Heart left ventricle (tissue), 16 donors: ENCODE measurements at regions of chr6 and their contacts with region 1.

Region 1: DNA sequence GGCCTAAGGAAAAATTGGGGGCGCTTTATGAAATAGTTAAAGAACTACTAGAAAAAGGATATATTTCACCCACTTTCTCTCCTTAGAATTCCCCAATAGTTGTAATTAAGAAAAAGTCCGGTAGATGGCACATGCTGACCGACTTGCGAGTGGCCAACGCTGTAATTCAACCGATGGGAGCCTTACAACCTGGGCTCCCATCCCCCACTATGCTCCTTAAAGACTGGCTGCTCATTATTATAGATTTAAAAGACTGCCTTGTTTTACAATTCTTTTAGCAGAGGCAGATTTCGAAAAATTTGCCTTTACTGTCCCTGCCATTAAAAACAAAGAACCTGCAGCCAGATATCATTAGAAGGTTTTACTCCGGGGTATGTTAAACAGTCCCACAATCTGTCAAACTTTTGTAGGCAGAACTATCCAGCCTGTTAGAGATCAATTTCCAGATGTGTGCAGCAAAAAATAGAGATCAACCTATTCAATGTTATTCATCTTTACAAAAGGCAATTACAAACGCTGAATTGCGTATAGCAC is 58.5 kb upstream of the PRSS16 start:
- DNase-seq: peak in 4 of 5 donors; percentile 52 to 65 (median 54)
- ATAC-seq: peak; percentile 77 to 97 (median 93)
- H3K4me3 ChIP-seq: peak overlapping the region; percentile 30 to 75 (median 65)
- H3K27ac ChIP-seq: peak overlapping the region in 11 of 12 donors; percentile 45 to 80 (median 65)
- H3K4me1 ChIP-seq: peaks cover 0 to 9% (median 4%) of the 10 kb centered on the region in 12 donors
- H3K27me3 ChIP-seq: peaks cover 0 to 4% (median 0%) of the 10 kb centered on the region in 9 donors
- CTCF ChIP-seq: peak; percentile 65 to 85 (median 78)
- POLR2A ChIP-seq: no peak

Region 2: DNA sequence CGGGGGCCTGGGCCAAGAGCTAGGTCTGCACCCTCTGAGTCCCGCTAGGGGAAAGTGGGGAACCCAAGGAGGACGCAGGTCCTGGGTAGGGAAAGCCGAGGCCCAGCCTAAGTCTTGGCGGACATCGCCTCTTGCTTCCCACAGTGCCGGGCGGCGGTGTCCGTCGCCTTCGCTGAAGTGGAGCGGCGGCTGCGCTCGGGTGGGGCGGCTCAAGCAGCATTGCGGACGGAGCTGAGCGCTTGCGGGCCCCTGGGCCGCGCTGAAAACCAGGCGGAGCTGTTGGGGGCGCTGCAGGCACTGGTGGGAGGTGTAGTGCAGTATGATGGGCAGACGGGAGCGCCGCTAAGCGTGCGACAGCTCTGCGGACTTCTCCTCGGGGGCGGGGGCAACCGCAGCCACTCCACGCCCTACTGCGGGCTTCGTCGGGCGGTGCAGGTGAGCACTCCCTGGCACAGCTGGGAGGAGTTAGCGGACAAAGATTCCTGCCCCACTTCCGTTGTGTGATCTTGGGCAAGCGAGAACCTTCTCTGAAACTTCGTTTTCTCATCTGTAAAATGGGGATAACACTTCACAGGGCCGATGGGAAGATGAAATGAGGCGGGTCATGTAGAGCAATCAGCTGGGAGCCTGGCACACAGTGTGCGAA is 62.8 kb after region 1 on chr6:
- intact Hi-C with region 1: no loop called
- DNase-seq: peak in 2 of 5 donors; percentile 26 to 70
- ATAC-seq: peak in 3 of 4 donors; percentile 34 to 54 (median 49)
- H3K4me3 ChIP-seq: peak overlapping the region; percentile 15 to 56 (median 38)
- H3K27ac ChIP-seq: no peak overlapping the region
- H3K4me1 ChIP-seq: peaks cover 0 to 16% (median 5%) of the 10 kb centered on the region in 12 donors
- H3K27me3 ChIP-seq: peaks cover 22 to 99% (median 67%) of the 10 kb centered on the region in 9 donors
- CTCF ChIP-seq: peak in 1 of 12 donors; percentile 12
- POLR2A ChIP-seq: no peak

Region 3: DNA sequence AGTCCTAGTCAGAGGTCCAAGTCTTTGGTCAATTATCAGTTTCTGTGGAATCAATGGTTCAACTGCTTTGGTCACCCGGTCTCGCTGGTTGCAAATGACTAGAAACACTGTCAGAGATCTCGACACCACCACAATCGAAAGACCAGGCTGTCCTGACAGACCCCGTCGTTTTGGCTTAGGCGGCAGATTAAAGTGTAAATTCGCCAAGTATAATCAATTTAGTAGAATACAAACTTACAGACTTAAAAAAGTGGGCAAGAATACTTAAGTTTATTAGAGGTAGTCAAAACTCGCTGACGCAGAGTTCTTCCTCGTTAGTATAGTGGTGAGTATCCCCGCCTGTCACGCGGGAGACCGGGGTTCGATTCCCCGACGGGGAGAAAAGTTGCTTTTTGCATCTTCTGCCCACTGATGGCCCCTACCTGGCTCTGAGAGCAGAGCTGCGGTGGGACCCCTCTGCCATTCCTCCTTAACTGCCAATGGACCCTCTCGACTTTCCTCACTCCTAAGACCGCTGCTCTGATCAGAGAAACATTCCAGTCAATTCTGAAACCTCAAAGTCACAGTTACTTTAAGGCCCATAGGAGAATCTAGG is 314.6 kb after region 1 on chr6:
- intact Hi-C with region 1: loop called in 1 of 10 experiments (anchors 10 kb)
- DNase-seq: peak; percentile 40 to 79 (median 44)
- ATAC-seq: peak; percentile 72 to 82 (median 79)
- H3K4me3 ChIP-seq: peak overlapping the region in 11 of 12 donors; percentile 29 to 63 (median 52)
- H3K27ac ChIP-seq: peak overlapping the region in 1 of 12 donors; percentile 2
- H3K4me1 ChIP-seq: peaks cover 0 to 13% (median 5%) of the 10 kb centered on the region in 12 donors
- H3K27me3 ChIP-seq: peaks cover 0 to 28% (median 2%) of the 10 kb centered on the region in 9 donors
- CTCF ChIP-seq: no peak
- POLR2A ChIP-seq: no peak

Region 4: GRCh38 chr6:27753668-27754407 is 564.9 kb after region 1 on chr6:
- intact Hi-C with region 1: loop called in 6 of 10 experiments (anchors 1 to 5 kb)
- DNase-seq: peak; percentile 37 to 81 (median 56)
- ATAC-seq: peak in 2 of 4 donors; percentile 67 to 77
- H3K4me3 ChIP-seq: peak overlapping the region in 10 of 12 donors; percentile 61 to 88 (median 69)
- H3K27ac ChIP-seq: no peak overlapping the region
- H3K4me1 ChIP-seq: peaks cover 0 to 23% (median 7%) of the 10 kb centered on the region in 12 donors
- H3K27me3 ChIP-seq: peaks cover 5 to 30% (median 20%) of the 10 kb centered on the region in 9 donors
- CTCF ChIP-seq: peak in 1 of 12 donors; percentile 7
- POLR2A ChIP-seq: peak in 1 of 2 donors; percentile 7

Region 5: DNA sequence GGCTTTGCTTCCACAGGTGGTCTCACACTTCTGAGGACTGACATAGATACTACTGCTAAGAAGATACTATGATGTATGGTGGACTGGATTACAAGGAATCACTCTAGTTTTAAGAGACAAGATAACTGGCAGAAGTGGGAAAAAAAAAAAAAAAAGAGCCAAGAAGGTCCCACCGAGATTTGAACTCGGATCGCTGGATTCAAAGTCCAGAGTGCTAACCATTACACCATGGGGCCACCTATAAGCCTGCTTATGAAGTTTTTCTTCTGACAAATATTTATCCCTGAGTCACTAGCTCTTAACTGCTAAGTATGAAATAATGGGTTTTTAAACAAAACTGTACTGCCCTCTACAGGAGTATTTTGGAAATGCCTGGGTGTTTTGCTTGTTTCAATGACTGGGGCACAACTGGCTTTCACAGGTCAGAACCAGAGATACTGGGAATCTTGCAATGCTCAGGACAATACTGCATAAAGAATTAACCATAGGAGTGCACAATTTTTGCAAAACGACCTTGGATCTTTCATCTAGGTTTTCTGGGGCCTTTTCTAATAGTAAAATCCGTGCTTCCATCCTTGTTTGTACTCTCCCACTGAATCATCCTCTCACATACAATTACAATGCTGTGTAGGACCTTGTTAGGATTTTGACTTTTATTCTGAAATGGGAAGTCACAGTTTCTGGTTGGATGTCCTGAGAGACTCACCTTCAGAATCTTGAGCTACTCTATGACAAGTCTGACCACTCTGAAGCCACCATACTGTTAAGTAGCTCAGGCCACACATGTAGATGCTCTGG is 606.9 kb after region 1 on chr6:
- intact Hi-C with region 1: loop called in 2 of 10 experiments (anchors 1 to 2 kb)
- DNase-seq: peak in 2 of 5 donors; percentile 42 to 51
- ATAC-seq: peak; percentile 54 to 80 (median 65)
- H3K4me3 ChIP-seq: no peak overlapping the region
- H3K27ac ChIP-seq: no peak overlapping the region
- H3K4me1 ChIP-seq: peaks cover 0 to 22% (median 5%) of the 10 kb centered on the region in 12 donors
- H3K27me3 ChIP-seq: peaks cover 0 to 32% (median 0%) of the 10 kb centered on the region in 9 donors
- CTCF ChIP-seq: peak; percentile 69 to 82 (median 80)
- POLR2A ChIP-seq: no peak